ENCODE measurements at regions of chr6 and their contacts with region 1.

Region 1: DNA sequence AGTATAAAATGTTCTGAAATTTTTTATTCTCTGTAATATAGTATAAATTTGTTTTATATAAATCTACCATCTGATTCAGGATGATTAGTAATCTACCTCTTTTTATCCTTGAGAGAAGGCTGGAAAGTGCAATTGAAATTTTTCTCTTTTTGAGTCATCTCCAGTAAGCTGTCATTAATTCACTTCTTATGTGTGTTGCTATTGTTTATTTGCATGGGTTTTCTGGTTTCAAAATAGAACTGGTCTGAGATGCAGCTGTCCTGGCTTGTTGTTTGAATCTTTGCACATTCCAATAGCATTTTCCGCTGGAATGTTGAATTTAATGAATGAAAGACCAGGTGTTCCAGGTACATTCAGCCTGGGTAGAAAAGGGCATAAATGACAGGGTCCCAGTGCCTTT is 24.3 kb upstream of the TAB2 start:
- DNase-seq: no peak
- ATAC-seq: no peak
- H3K4me3 ChIP-seq: no peak overlapping the region
- H3K27ac ChIP-seq: no peak overlapping the region
- H3K4me1 ChIP-seq: no peaks in the 10 kb centered on the region
- H3K27me3 ChIP-seq: no peaks in the 10 kb centered on the region
- CTCF ChIP-seq: no peak

Region 2: GRCh38 chr6:149190224-149190831 is 102.9 kb before region 1 on chr6:
- CTCF ChIA-PET with region 1: interaction called, 11 read pairs
- POLR2A ChIA-PET with region 1: no interaction called
- in situ Hi-C with region 1: no loop called
- intact Hi-C with region 1: no loop called
- DNase-seq: peak; percentile 2
- ATAC-seq: no peak
- H3K4me3 ChIP-seq: no peak overlapping the region
- H3K27ac ChIP-seq: no peak overlapping the region
- H3K4me1 ChIP-seq: no peaks in the 10 kb centered on the region
- H3K27me3 ChIP-seq: no peaks in the 10 kb centered on the region
- CTCF ChIP-seq: peak; percentile 32

Measured in Panc1 (cell line).